ENCODE measurements at regions of chr6 and their contacts with region 1.

Region 1: DNA sequence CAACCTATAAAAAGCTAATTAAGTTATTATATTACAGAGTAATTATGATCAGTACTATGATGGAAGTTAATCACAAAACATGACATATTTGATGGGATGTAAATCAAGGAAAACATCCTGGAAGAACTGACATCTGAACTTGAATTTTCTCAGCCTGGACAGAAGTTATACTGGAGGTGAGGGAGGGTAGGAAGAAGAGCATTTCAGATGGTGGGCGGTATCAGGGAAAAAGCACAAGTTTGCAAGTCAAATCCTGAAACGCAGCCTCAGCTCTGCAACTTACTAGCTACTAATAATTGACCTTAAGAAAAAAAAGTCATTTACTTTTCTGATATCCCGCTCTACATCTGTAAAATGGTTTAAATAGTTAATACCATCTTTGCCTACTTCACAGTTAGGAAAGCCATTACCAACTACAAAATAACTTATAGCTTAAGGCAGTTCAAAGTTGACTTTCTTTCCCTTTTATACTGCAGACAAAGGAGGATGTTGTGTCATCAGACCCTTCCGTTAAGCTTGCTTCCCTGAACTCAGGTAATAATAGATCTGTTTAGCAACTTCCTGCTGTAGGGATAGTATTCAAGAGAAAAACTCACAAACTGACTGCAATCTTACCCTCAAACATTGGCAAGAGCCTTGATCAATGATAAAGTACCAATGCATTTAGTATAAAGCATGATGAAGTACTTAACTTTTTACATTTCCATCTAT is 21.0 kb downstream of the NOL7 start:
- DNase-seq: no peak
- ATAC-seq: peak; percentile 85
- H3K4me3 Mint-ChIP-seq: no peak overlapping the region
- H3K27ac Mint-ChIP-seq: peak overlapping the region; percentile 90
- H3K4me1 Mint-ChIP-seq: peaks cover 54% of the 10 kb centered on the region
- H3K27me3 Mint-ChIP-seq: no peaks in the 10 kb centered on the region
- CTCF ChIP-seq: no peak

Region 2: DNA sequence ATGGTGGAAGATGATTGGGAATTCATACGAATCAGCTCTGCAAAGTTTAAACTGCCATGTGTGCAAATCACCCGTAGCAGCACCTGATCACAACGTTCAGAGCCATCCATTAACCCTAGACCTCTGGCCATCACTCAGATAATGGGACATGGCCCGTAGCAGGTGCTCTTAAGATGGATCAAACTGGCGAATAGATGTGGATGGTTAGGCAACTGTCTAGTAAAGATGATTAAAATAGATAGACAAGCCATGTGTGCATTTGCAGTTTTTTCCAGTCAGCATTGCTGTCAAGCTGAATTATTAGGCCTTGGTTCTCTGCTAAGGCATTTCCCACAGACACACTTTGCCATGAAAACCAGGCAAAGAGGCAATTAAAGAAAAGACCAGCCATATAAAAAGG is 960.2 kb before region 1 on chr6:
- CTCF ChIA-PET with region 1: no interaction called
- POLR2A ChIA-PET with region 1: no interaction called
- DNase-seq: no peak
- ATAC-seq: no peak
- H3K4me3 Mint-ChIP-seq: no peak overlapping the region
- H3K27ac Mint-ChIP-seq: no peak overlapping the region
- H3K4me1 Mint-ChIP-seq: peaks cover 24% of the 10 kb centered on the region
- H3K27me3 Mint-ChIP-seq: no peaks in the 10 kb centered on the region
- CTCF ChIP-seq: no peak

Region 3: GRCh38 chr6:13554929-13555333 is 81.2 kb before region 1 on chr6:
- CTCF ChIA-PET with region 1: no interaction called
- POLR2A ChIA-PET with region 1: no interaction called
- DNase-seq: peak; percentile 70
- ATAC-seq: peak; percentile 98
- H3K4me3 Mint-ChIP-seq: peak overlapping the region; percentile 14; the same call in 1 of the 2 replicates
- H3K27ac Mint-ChIP-seq: peak overlapping the region; percentile 50
- H3K4me1 Mint-ChIP-seq: peaks cover 25% of the 10 kb centered on the region
- H3K27me3 Mint-ChIP-seq: no peaks in the 10 kb centered on the region
- CTCF ChIP-seq: no peak

Region 4: GRCh38 chr6:13586603-13587542 is 49.2 kb before region 1 on chr6:
- CTCF ChIA-PET with region 1: no interaction called
- POLR2A ChIA-PET with region 1: no interaction called
- DNase-seq: no peak
- ATAC-seq: no peak
- H3K4me3 Mint-ChIP-seq: no peak overlapping the region
- H3K27ac Mint-ChIP-seq: no peak overlapping the region
- H3K4me1 Mint-ChIP-seq: no peaks in the 10 kb centered on the region
- H3K27me3 Mint-ChIP-seq: no peaks in the 10 kb centered on the region
- CTCF ChIP-seq: no peak

Region 5: DNA sequence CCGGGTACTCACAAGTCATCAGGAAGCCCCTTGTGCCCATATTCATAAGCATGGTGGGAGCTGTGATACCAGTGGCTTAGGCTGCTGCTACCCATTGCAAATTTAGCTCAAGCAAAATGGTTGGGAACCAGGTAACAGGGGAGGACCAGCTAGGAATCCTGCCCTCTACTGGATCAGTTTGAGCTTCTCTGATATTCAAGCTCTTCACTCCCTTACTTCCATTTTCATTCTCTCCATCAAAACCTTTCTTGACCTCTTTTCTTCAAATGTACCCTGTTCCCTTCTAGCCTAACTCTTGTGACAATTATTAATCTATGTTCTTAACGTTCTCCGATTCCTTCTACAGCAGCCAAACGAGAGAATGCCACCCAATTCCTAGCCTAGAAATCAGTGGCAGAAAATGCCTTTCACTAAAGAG is 11.2 kb before region 1 on chr6:
- CTCF ChIA-PET with region 1: interaction called, 51 read pairs
- POLR2A ChIA-PET with region 1: interaction called, 3 read pairs
- DNase-seq: peak; percentile 19
- ATAC-seq: peak; percentile 99
- H3K4me3 Mint-ChIP-seq: no peak overlapping the region
- H3K27ac Mint-ChIP-seq: peak overlapping the region; percentile 32
- H3K4me1 Mint-ChIP-seq: peaks cover 5% of the 10 kb centered on the region
- H3K27me3 Mint-ChIP-seq: no peaks in the 10 kb centered on the region
- CTCF ChIP-seq: 0 out of 2 replicates have a peak, but pooled peaks have one; percentile 28

Region 6: DNA sequence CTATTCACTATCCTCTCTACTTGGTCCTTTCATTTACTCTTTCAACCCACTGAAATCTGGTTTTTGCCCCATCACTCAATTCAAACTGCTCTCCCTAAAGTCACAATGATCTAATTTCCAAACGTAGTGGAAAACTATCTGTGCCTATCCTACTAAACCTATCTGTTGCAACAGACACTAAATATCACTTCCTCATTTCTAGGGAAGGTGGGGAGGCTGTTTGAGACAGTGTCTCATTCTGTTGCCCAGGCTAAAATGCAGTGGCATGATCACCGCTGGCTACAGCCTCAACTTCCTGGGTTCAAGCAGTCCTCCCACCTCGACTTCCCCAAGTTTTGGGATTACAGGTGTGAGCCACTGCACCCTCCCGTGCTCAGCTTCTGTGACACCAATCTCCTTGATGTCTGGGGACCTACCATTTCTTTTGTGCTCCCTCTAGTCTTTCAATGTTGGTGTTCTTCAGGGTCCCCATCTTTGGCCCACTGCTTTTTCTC is 66.8 kb after region 1 on chr6:
- CTCF ChIA-PET with region 1: no interaction called
- POLR2A ChIA-PET with region 1: no interaction called
- DNase-seq: no peak
- ATAC-seq: no peak
- H3K4me3 Mint-ChIP-seq: no peak overlapping the region
- H3K27ac Mint-ChIP-seq: no peak overlapping the region
- H3K4me1 Mint-ChIP-seq: peaks cover 17% of the 10 kb centered on the region
- H3K27me3 Mint-ChIP-seq: no peaks in the 10 kb centered on the region
- CTCF ChIP-seq: no peak